Left ventricle myocardium superior (tissue), 1 donor: ENCODE measurements at regions of chr13 and their contacts with region 1.

Region 1: GRCh38 chr13:27980280-27980998 is 8.1 kb downstream of the URAD start:
- DNase-seq: no peak
- ATAC-seq: no peak

Region 2: DNA sequence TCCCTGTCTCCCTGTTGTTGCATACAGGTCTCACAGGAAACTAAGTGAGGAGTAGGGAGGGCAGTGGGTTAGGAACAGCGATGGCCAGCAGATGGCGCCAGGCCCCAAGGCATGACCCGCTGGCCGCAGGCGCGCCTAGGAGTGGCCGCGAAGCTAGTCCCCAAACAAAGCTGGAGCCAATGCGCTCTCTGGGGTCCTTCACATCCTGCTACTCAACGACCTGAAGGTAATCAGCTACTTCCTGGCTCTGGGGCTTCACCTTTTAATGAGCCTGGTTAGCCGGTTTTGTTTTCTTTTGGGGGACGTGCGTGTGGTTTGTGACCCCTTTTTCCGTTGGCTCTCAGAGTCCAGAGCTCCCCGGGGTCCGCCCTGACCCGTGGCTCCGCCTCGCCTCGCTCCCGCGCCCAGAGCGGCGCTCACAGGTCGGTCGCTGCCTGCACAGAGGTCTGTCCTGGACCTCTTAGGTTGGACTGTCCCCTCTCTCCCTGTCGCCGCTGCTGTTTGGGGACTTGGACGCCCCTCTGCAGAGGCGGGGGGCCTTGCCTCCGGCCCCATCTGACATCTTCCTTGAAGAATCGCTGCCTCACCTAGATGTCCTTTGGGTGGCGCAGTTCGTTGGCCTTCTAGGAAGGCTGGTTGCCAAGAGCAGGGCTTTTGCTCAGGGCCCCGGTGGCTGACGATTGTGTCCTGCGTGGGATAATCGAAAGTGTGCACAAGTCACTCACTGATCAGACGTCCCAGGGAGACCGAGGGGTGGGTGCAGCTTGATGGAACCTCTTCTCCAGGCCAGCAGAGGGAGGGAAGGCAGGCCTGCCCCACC is 618.2 kb before region 1 on chr13:
- intact Hi-C with region 1: loop called (anchors 5 kb)
- DNase-seq: peak; percentile 93
- ATAC-seq: peak; percentile 95

Region 3: DNA sequence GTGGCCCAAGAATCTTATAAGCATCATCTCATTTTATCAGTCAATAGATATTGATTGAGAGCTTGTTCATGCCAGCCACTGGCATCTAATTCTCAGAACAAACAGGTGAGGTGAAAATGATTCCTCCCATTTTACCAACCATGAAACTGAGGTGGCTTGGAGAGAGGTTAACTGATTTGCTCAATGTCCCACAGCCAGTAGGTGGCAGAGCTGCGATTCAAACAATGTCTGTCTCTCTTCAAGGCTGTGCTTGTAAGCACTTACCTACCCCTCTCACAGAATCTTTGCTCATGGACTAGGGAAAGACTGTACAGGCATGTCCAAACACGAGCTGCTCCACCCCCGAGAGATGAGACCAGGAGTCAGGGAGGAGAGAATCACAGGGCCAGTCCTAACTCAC is 209.6 kb before region 1 on chr13:
- intact Hi-C with region 1: no loop called
- DNase-seq: no peak
- ATAC-seq: no peak

Region 4: DNA sequence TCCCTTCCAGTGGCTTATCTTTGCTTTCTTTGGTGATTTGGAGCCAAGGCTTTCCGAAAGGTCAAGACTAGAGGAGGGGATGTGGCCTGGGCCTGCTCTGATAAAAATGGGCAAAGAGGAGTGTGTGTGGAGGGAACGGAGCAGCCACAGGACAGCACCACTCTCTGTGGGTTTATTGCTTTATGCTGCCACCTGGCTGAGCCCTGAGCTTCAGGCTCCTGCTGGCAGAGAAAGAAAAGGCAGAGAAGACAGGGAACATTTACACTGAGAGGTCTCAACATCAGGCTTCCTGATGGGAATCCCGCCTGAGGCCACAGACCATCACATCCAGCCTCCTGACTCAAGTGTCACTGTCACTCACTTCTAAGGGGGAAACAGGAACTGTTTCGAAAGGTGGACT is 197.3 kb before region 1 on chr13:
- intact Hi-C with region 1: no loop called
- DNase-seq: no peak
- ATAC-seq: peak; percentile 52

Region 5: DNA sequence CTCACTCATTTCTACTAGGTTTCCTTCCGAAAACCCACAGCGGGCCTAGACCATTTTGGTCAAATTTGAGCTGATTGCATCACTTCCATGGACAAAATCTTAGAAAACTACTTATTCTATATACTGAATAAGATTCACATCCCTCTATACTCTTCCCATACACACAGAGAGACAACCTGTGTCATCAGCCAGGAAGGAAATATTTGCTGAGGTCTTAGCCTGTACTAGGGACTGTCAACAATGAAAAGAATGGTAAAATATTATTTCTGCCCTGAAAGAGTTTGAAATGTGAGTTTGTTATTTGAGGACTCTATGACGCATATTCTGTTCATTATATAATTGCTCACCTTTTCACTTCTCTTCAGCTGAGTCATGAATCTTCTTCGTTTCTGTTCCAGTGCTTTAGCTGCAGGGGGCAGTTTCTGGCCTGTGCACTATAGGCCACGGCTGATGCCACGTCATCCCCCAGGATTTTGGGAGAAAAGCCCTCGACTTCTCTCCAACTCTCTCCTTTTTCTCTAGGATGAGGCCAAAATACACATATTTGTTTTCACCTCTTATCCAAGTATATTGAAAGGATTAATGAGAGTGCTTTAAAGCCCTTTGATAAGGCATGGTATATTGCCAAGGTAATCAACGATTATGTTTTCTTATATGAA is 140.5 kb before region 1 on chr13:
- intact Hi-C with region 1: loop called (anchors 10 kb)
- DNase-seq: no peak
- ATAC-seq: no peak

Region 6: DNA sequence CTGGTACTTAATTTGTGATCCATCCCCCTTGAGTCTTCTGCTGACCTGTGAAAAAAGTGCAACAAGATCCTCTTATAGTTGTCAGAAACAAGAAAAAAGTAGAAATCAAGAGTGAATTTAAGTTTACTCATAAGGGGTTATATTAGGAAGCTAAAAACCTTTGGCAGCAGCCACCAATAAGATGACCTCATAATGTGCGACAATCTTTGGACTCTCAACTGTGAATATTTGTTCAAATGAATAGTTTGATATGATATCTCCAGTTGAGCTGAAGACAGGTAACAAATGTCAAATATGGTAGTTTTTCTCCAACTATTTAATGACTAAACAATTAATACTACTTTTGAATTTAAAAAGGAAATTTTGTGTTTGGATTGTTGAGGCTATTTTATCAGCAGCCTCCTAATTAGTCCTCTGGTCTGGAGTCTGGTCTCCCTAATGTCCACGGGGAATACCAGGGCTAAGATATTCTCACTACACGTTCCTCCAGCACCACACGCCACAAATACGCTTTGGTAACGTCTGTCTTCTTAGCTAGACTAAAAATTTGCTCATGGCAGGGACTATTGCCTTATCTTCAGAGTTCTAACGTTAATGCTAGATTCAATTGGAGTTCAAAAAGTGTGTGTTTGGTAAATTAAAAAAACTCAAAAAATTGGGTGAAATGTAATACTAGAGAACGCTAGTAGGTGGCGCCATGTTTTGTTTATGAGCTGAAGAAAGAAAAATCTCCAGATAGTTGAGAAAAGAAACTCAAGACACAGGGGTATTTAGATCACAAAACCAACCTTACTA is 111.6 kb before region 1 on chr13:
- intact Hi-C with region 1: no loop called
- DNase-seq: no peak
- ATAC-seq: no peak

Region 7: DNA sequence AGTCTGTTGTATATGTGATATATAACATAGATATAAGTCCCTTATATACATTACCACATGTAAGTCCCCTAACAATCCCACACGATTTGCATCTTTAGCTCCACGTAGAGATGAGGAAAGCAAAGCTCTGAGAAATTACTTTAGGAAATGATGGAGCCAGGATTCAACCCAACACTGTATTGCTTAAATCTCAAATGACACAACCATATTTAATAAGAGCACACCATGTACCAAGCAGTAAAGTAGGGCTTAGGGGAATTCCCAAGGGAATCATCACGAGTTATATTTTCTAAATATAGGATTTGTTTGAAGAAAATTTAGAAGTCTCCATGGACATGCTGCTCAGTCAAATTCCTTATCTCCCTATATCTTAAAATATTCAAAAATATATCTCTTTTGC is 617.2 kb after region 1 on chr13:
- intact Hi-C with region 1: no loop called
- DNase-seq: no peak
- ATAC-seq: peak; percentile 43